Psoas muscle (tissue), 8 donors: ENCODE measurements at regions of chr13 and their contacts with region 1.

Region 1: DNA sequence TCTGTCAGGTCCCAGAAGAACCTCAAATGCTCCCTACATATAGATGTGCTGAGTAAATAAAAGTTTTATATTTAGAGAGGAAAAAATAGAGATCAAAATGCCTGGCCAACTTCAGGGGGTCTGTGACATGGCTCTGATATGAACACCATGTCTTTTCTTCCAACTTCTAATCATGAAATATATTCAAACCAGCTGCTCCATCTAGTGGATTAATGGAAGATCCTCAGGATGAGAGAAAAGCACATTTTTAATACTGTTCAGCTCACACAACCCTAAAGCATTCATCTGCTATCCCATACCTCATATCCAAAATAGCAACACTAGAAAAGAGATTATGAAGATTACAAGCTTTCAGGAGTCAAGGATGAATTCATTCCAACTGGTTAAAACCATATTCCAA is 56.0 kb upstream of the DOCK9 start:
- DNase-seq: no peak
- ATAC-seq: peak in 2 of 4 donors; percentile 45 to 63
- H3K4me3 ChIP-seq: no peak overlapping the region
- H3K27ac ChIP-seq: no peak overlapping the region
- H3K4me1 ChIP-seq: no peaks in the 10 kb centered on the region
- H3K27me3 ChIP-seq: no peaks in the 10 kb centered on the region
- CTCF ChIP-seq: peak; percentile 54

Region 2: GRCh38 chr13:97583907-97584497 is 1449.8 kb before region 1 on chr13:
- intact Hi-C with region 1: no loop called
- DNase-seq: no peak
- ATAC-seq: no peak
- H3K4me3 ChIP-seq: no peak overlapping the region
- H3K27ac ChIP-seq: no peak overlapping the region
- H3K4me1 ChIP-seq: no peaks in the 10 kb centered on the region
- H3K27me3 ChIP-seq: peaks cover 0 to 2% (median 0%) of the 10 kb centered on the region in 3 donors
- CTCF ChIP-seq: no peak

Region 3: DNA sequence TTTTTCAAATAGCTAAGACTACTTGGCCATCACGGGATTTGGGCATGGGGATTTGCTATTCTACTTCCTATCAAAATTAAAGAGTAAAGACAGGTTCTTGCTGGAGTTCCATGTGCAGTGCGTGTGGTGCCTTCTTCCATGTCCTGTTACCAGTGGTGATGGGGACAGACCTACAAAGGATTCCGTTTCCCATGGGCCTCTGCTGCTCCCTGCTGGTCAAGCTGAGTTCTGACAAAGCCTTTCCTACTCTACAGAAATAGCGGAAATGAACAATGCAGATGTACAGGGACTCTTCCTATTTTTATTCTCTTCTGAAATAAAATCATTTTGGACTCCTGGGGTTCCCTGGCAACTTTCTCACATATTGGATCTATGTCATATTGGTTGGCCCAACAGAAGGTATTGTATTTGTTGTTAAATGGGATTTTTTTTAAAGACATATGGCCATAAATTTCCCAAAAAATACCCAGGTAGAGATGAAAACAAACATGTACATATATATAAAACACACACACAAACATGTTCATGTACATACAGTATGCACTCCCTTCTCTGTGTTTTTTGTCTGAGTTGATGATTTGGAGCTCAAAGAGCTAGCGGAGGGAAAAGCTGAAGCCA is 190.8 kb before region 1 on chr13:
- intact Hi-C with region 1: loop called (anchors 5 to 10 kb)
- DNase-seq: peak; percentile 60 to 82
- ATAC-seq: peak; percentile 71 to 85 (median 75)
- H3K4me3 ChIP-seq: no peak overlapping the region
- H3K27ac ChIP-seq: no peak overlapping the region
- H3K4me1 ChIP-seq: no peaks in the 10 kb centered on the region
- H3K27me3 ChIP-seq: no peaks in the 10 kb centered on the region
- CTCF ChIP-seq: peak; percentile 75

Region 4: GRCh38 chr13:98869408-98870090 is 164.3 kb before region 1 on chr13:
- intact Hi-C with region 1: loop called in 1 of 2 experiments (anchors 10 kb)
- DNase-seq: no peak
- ATAC-seq: peak in 3 of 4 donors; percentile 49 to 77 (median 68)
- H3K4me3 ChIP-seq: no peak overlapping the region
- H3K27ac ChIP-seq: no peak overlapping the region
- H3K4me1 ChIP-seq: no peaks in the 10 kb centered on the region
- H3K27me3 ChIP-seq: no peaks in the 10 kb centered on the region
- CTCF ChIP-seq: no peak

Region 5: GRCh38 chr13:98977568-98978265 is 56.1 kb before region 1 on chr13 and contains the start of gene DOCK9:
- intact Hi-C with region 1: loop called in 1 of 2 experiments (anchors 5 kb)
- DNase-seq: peak; percentile 59 to 68
- ATAC-seq: peak; percentile 53 to 81 (median 76)
- H3K4me3 ChIP-seq: peak within 1 kb of the TSS; percentile 62
- H3K27ac ChIP-seq: peak within 1 kb of the TSS; percentile 39
- H3K4me1 ChIP-seq: no peaks in the 10 kb centered on the region
- H3K27me3 ChIP-seq: peaks cover 0 to 10% (median 0%) of the 10 kb centered on the region in 3 donors
- CTCF ChIP-seq: no peak
- total RNA-seq, gene DOCK9: 14.8 to 39.5 (median 28.5) TPM

Region 6: DNA sequence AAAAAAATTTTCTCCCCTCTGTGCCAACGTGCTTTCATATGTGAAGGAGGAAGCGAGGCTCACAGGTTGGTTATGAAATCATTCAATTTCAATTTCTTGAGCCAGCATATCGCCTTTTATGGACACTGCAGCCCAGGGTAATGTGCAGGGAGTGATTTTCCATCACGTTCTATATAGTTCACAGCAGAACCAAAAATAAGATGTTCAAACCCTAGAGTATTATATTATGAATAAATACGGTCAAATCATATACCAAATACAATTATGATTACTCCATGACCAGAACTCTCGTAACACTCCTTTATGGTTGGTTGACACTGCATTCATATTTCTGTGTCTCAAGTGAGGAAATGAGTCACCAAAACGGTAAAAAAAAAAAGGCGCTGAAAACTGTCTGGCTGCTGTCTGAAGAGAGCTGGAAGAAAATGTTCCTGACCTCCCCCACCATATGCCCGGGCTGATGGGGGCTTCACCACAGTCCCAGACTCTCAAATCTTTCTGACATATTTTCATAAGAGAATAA is 91.0 kb after region 1 on chr13:
- intact Hi-C with region 1: no loop called
- DNase-seq: no peak
- ATAC-seq: peak in 2 of 4 donors; percentile 34 to 44
- H3K4me3 ChIP-seq: no peak overlapping the region
- H3K27ac ChIP-seq: no peak overlapping the region
- H3K4me1 ChIP-seq: no peaks in the 10 kb centered on the region
- H3K27me3 ChIP-seq: peaks cover 0 to 4% (median 0%) of the 10 kb centered on the region in 3 donors
- CTCF ChIP-seq: no peak